AG04449 (cell line): ENCODE measurements at regions of chr16 and their contacts with region 1.

Region 1: GRCh38 chr16:2267913-2268666 is at the start of gene RNPS1:
- DNase-seq: peak; percentile 56
- H3K4me3 ChIP-seq: peak within 1 kb of the TSS; percentile 98
- CTCF ChIP-seq: no peak

Region 2: DNA sequence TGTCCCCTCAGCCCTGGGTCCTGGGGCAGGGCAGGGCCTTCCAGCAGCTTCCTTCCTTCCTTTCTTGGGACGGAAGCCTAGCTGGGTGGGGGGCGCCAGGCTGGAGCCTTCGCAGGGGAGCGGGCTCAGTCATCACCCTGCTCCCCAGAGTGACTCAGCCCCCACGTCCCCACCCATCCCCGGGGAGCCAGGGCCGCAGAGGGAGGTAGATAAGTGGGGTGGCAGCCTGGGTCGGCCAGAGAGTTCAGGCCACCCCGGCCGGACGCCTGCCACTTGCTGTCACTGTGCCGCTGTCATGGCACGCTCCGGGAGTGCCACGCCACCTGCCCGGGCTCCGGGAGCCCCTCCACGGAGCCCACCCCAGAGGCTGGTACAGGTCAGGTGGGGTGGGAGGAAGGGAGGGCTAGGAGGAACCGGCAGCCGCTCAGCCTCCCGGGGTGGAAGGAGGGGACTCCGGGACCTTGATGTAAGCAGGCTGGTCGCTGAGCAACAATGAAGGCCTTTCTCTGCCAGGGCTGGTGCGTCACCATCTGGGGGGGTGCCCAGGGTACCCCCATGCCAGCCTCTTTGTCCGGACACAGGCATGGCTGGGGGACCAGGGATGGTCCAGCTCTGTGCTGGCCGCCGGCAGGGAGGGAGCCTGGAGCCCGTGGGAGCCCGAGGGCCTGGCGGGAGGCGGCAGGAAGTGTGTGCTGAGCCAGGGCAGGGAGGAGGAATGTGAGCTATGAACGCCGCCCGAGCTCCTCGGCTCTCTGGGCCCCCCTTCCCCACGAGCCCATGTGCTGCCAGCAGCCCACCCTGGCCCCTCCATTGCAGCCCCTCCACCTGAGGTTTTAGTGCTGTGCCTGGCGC is 234.8 kb before region 1 on chr16:
- CTCF ChIA-PET with region 1: no interaction called
- POLR2A ChIA-PET with region 1: no interaction called
- DNase-seq: no peak
- H3K4me3 ChIP-seq: peak overlapping the region; percentile 53
- CTCF ChIP-seq: no peak

Region 3: DNA sequence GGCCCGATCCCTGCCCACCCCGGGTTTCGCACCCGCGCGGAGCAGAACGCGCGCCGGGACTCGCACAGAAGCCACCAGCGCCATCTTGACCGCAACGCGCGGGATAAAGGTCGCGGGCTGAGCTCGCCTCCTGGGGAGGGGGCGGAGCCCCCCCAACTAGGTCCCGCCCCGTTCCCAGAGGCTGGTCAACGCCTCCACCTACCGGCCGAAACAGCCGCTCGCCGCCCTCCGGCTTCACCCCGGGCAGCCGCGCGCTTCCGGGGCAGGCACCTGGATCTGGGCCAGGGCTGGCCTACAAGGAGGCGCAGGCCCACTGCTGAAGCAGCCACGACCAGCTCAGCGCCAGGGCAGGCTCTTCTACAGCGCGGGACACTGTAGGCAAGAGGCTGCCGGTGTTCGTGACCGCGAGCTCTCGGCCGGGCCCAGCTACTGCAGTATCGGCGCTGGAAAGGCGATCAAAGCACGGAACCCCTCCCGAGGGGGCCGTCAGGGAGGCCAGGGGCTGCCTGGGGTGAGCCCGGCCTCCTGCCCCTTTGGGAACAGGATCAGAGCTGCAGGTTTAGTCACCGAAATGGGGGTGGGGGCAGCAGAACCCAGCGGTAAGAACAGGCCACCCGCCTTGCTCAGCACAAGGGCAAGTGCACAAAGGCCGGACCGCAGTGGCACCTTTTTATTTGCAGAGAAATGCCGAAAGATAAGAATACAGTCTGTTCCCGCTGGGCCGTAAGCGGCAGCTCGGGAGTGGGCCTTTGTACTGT is 16.4 kb before region 1 on chr16 and contains the start of gene ECI1:
- CTCF ChIA-PET with region 1: interaction called, 44 read pairs
- POLR2A ChIA-PET with region 1: interaction called, 6 read pairs
- DNase-seq: peak; percentile 54
- H3K4me3 ChIP-seq: peak within 1 kb of the TSS; percentile 70
- CTCF ChIP-seq: peak; percentile 79

Region 4: GRCh38 chr16:2450535-2450934 is 182.4 kb after region 1 on chr16:
- CTCF ChIA-PET with region 1: no interaction called
- POLR2A ChIA-PET with region 1: no interaction called
- DNase-seq: no peak
- H3K4me3 ChIP-seq: no peak overlapping the region
- CTCF ChIP-seq: no peak